ENCODE measurements at regions of chr3 and their contacts with region 1.

Region 1: GRCh38 chr3:34683851-34684250 is 885.4 kb downstream of the PDCD6IP start:
- DNase-seq: peak in 4 of 5 donors; percentile 39 to 61 (median 56)
- ATAC-seq: peak in 3 of 4 donors; percentile 64 to 74 (median 69)
- H3K4me3 ChIP-seq: no peak overlapping the region
- H3K27ac ChIP-seq: no peak overlapping the region
- H3K4me1 ChIP-seq: peaks cover 0 to 3% (median 0%) of the 10 kb centered on the region in 12 donors
- H3K27me3 ChIP-seq: no peaks in the 10 kb centered on the region
- CTCF ChIP-seq: peak; percentile 39 to 70 (median 62)
- POLR2A ChIP-seq: no peak

Region 2: DNA sequence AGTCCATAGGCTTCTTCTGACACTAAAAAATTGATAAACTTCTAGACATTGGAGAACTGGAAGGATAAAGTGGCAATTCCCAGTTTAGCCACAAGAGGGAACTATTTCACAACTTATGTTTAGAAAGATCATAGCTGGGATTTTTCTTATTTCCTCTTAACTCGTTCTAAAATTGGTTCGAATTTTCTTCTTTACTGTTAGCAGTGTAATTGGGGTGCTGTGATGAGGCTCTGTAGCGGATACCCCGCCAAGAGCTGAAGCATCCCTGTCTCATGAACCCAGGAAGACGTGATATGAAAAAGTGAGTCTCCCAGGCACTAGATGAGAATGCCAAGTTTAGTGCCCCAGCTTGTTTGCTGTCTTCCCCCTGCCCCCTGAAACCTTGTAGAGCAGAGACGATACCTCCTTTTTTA is 800.3 kb before region 1 on chr3:
- intact Hi-C with region 1: loop called (anchors 1 to 5 kb)
- DNase-seq: no peak
- ATAC-seq: peak in 2 of 4 donors; percentile 24 to 46
- H3K4me3 ChIP-seq: peak overlapping the region in 9 of 12 donors; percentile 0 to 40 (median 25)
- H3K27ac ChIP-seq: no peak overlapping the region
- H3K4me1 ChIP-seq: peaks cover 0 to 12% (median 6%) of the 10 kb centered on the region in 12 donors
- H3K27me3 ChIP-seq: no peaks in the 10 kb centered on the region
- CTCF ChIP-seq: peak; percentile 83 to 93 (median 88)
- POLR2A ChIP-seq: no peak

Region 3: DNA sequence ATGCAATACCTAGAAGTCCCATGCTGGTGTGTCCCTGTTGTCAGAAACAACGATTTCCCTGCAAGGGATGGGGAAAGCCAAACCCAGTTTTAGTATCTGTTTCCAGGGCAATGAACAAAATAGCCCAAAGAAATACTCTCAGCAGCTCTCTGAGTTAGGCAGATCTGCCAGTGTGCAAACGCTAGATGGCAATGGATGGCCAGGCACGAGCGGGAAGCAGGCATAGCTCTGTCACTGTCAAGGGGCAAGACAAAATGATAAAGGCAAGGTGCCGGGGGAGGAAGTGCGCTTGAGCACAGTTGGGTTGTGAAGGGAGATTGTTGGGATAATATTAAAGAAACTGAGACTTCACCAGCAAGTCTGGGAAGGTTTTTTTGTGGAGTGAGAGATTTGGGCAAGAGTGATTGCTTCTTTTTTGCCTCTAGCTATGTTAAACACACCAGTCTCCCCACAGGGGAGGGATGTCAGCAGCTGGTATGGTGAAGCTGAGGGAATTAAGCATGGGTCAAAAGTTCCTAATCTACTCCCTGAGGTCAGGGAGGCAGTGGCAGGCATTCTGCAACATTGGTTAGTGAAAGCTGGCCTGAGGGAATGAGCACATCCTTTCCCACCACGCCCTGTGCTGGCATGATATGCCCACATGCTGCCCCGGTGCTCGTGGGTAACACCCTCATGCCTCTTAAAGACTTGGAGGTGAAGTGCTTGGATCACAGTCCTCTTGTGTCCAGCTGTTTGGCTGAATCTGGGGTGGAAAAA is 767.9 kb before region 1 on chr3:
- intact Hi-C with region 1: loop called in 4 of 10 experiments (anchors 10 kb)
- DNase-seq: peak in 2 of 5 donors; percentile 32 to 34
- ATAC-seq: peak in 3 of 4 donors; percentile 56 to 78 (median 71)
- H3K4me3 ChIP-seq: no peak overlapping the region
- H3K27ac ChIP-seq: no peak overlapping the region
- H3K4me1 ChIP-seq: peaks cover 0 to 4% (median 0%) of the 10 kb centered on the region in 12 donors
- H3K27me3 ChIP-seq: no peaks in the 10 kb centered on the region
- CTCF ChIP-seq: peak in 10 of 12 donors; percentile 11 to 39 (median 32)
- POLR2A ChIP-seq: no peak

Region 4: DNA sequence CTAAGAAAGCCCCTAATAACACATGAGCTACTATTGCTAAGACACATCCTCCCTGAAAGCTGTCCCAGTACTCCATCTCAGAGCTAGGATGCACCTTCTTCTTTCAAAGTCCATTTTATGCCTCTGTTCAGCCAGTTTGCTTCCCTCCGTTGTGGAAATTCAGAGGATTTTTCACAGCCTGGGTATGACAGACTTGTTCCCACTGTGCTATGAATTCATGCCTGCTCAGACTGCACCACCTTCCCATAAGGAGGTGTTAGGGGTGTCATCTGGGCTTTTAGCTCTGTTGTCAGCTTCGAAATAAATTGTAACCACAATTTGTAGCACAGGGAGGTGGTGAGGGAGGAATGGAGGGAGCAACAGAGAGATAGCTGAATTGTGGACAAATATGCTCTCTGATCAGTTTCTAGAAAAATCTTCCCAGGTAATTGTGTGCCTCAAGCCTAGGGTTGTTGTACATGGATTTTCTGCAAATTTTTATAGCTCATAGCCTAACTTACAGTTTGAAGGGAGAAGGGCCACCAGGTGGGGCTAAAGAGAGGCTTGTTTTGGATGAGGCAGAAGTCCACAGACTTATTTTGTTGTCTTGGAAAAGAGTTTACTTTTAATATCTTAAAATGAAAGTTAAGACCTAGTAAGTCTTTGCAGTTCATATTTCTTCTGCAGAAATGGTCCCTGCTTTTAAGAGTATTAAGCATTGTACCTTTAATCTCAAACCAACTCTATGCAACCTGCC is 423.4 kb before region 1 on chr3:
- intact Hi-C with region 1: loop called (anchors 2 to 5 kb)
- DNase-seq: peak in 4 of 5 donors; percentile 30 to 60 (median 40)
- ATAC-seq: peak in 2 of 4 donors; percentile 44 to 52
- H3K4me3 ChIP-seq: no peak overlapping the region
- H3K27ac ChIP-seq: peak overlapping the region in 1 of 12 donors; percentile 44
- H3K4me1 ChIP-seq: peaks cover 0 to 41% (median 9%) of the 10 kb centered on the region in 12 donors
- H3K27me3 ChIP-seq: no peaks in the 10 kb centered on the region
- CTCF ChIP-seq: peak; percentile 41 to 77 (median 62)
- POLR2A ChIP-seq: no peak

Measured in heart left ventricle (tissue), 16 donors.